WTC11 (cell line): ENCODE measurements at regions of chr6 and their contacts with region 1.

Region 1: GRCh38 chr6:3929281-3929798 is 80.2 kb downstream of the FAM50B start:
- DNase-seq: no peak
- ATAC-seq: no peak
- H3K4me3 Mint-ChIP-seq: no peak overlapping the region
- H3K27ac Mint-ChIP-seq: no peak overlapping the region
- H3K4me1 Mint-ChIP-seq: peaks cover 17% of the 10 kb centered on the region
- H3K27me3 Mint-ChIP-seq: no peaks in the 10 kb centered on the region
- CTCF ChIP-seq: no peak

Region 2: GRCh38 chr6:3742426-3743344 is 186.7 kb before region 1 on chr6:
- CTCF ChIA-PET with region 1: interaction called, 23 read pairs
- POLR2A ChIA-PET with region 1: no interaction called
- DNase-seq: peak; percentile 93
- ATAC-seq: peak; percentile 74
- H3K4me3 Mint-ChIP-seq: no peak overlapping the region; the same call in 1 of the 2 replicates
- H3K27ac Mint-ChIP-seq: no peak overlapping the region
- H3K4me1 Mint-ChIP-seq: peaks cover 41% of the 10 kb centered on the region
- H3K27me3 Mint-ChIP-seq: peaks cover 11% of the 10 kb centered on the region
- CTCF ChIP-seq: peak; percentile 95

Region 3: DNA sequence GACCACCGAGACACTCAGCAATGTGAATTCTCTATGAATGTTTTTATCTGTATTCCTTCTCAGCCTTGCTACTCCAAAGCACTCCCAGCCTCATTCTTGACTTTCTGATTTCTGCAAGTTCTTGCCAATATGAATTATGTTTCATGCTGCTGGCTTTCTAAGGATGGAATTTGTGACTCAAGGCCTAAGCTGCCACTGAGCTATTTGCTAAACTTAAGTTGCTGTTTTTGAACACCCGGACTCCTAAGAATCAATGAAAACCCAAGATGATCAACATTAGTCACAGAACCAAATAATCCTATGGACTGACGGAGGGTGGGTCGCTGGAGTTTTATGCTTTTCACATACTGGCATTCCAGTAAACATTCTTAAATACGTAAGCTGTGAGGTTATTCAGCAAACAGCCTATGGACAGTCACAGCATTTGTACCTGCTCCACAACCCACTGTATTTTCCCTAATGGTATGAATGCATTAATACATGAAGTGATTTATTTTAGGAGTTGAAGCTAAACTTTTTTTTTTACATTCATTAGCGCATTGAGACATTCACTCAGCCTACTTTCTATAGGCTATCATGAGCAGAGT is 169.6 kb before region 1 on chr6:
- CTCF ChIA-PET with region 1: interaction called, 11 read pairs
- POLR2A ChIA-PET with region 1: no interaction called
- DNase-seq: no peak
- ATAC-seq: no peak
- H3K4me3 Mint-ChIP-seq: no peak overlapping the region
- H3K27ac Mint-ChIP-seq: no peak overlapping the region; the same call in 1 of the 2 replicates
- H3K4me1 Mint-ChIP-seq: peaks cover 26% of the 10 kb centered on the region
- H3K27me3 Mint-ChIP-seq: peaks cover 7% of the 10 kb centered on the region
- CTCF ChIP-seq: no peak

Region 4: DNA sequence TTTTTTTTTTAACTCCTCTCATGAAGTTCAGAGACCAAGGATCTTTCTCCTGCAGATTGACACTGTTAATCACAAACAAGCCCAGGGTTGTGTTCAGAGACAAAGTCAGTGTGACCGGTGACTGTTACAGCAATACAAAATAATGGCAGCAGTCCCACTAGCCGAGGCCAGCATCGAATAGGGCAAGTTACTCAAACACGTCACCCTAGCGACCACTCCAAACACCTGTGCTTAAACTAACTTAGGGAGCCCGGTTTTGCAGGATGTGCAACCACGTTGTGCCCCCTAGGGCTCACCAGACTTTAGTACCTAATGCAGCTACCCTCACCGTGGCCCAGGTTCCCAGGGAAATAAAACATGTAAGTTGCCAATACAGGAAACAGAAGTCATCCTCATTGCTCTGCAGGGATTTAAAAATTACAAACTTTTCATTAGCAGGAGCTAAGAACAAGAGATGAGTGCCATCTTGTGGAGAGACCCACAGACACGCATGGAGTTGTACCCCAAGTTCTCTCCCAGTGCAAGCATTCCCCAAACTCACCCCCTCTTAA is 42.1 kb before region 1 on chr6:
- CTCF ChIA-PET with region 1: interaction called, 33 read pairs
- POLR2A ChIA-PET with region 1: no interaction called
- DNase-seq: no peak
- ATAC-seq: peak; percentile 51; the same call in 1 of the 2 replicates
- H3K4me3 Mint-ChIP-seq: no peak overlapping the region
- H3K27ac Mint-ChIP-seq: no peak overlapping the region
- H3K4me1 Mint-ChIP-seq: peaks cover 19% of the 10 kb centered on the region
- H3K27me3 Mint-ChIP-seq: no peaks in the 10 kb centered on the region; the same call in 1 of the 2 replicates
- CTCF ChIP-seq: no peak

Region 5: GRCh38 chr6:3905945-3906845 is 23.1 kb before region 1 on chr6:
- CTCF ChIA-PET with region 1: interaction called, 15 read pairs
- POLR2A ChIA-PET with region 1: no interaction called
- DNase-seq: peak; percentile 41
- ATAC-seq: peak; percentile 74
- H3K4me3 Mint-ChIP-seq: no peak overlapping the region
- H3K27ac Mint-ChIP-seq: peak overlapping the region; percentile 83
- H3K4me1 Mint-ChIP-seq: peaks cover 68% of the 10 kb centered on the region
- H3K27me3 Mint-ChIP-seq: no peaks in the 10 kb centered on the region; the same call in none of the 2 replicates
- CTCF ChIP-seq: no peak

Region 6: DNA sequence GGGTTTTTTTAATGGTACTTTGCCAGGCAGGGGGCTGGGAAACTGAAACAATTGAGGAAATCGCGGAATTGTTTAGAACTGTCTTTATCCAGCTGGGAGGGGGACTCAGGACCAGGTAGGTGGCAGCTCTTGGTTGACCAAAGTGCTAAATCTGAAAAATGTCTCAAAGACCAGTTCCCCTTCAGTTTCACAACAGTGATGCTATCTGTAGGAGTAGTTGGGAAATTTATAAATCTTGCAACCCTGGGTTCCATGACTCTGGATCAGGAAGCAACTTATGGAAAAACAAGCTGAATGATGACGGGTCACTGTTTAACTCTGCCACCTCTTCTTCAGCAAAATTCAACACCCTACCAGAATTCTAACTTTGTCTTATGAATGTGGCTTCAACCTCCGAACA is 19.5 kb after region 1 on chr6:
- CTCF ChIA-PET with region 1: interaction called, 15 read pairs
- POLR2A ChIA-PET with region 1: no interaction called
- DNase-seq: no peak
- ATAC-seq: no peak
- H3K4me3 Mint-ChIP-seq: no peak overlapping the region
- H3K27ac Mint-ChIP-seq: no peak overlapping the region
- H3K4me1 Mint-ChIP-seq: peaks cover 22% of the 10 kb centered on the region
- H3K27me3 Mint-ChIP-seq: no peaks in the 10 kb centered on the region; the same call in 1 of the 2 replicates
- CTCF ChIP-seq: no peak

Region 7: DNA sequence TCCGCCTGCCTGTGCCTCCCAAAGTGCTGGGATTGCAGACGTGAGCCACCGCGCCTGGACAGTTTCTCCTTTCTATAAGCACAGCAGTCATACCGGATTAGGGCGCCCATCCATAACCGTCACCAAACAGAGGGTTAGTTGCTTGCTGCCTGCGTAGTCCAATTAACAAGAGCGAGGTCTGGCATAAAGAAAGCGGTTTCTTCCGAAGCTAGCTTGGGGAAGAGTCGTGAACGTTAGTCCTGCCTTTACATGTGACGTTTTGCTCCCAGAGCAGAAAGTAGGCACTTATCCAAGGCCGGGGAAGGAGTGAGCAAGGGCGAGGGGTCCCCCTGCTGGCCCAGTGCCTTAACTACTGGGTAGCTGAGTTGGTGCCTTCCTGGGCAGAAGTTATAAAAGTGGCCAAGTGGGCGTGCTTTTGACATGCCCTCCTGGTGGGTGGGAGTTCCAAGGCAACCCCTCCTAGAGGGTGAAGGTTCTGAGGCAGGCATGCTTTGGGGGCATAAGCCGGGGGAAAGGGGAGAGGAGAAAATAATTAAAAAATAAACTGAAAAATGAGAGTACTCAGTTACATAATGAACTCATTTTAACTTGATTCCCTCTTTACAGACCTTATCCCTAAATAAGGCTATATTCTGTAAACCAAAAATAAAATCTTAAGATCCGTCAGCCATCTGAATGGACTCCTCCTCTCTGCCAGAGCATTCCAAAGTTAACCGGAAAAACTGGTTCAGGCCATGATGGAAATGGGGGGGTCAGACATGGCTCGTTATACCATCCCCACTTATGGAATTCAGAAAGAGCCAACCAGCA is 61.6 kb after region 1 on chr6:
- CTCF ChIA-PET with region 1: interaction called, 20 read pairs
- POLR2A ChIA-PET with region 1: no interaction called
- DNase-seq: peak; percentile 90
- ATAC-seq: peak; percentile 94
- H3K4me3 Mint-ChIP-seq: peak overlapping the region; percentile 29
- H3K27ac Mint-ChIP-seq: peak overlapping the region; percentile 42
- H3K4me1 Mint-ChIP-seq: peaks cover 44% of the 10 kb centered on the region
- H3K27me3 Mint-ChIP-seq: no peaks in the 10 kb centered on the region
- CTCF ChIP-seq: peak; percentile 78

Region 8: DNA sequence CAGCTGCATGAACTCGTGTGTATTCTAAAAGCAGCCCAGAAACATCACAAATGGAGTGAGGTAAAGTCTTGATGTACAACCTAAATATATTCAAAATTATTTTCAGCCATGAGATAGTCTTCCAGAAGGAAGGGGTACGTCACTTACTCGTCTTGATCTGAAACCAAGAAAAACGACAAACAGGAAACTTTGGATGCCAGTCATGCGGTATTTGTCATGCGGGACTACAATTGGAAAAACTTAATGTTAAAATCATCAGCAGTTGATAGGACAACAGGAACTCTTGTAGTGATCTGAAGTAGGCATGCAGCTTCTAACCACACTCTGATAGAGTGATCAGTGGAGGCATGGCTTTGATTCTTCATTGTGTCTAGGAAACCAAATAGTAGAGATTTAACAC is 119.9 kb after region 1 on chr6:
- CTCF ChIA-PET with region 1: no interaction called
- POLR2A ChIA-PET with region 1: no interaction called
- DNase-seq: no peak
- ATAC-seq: no peak
- H3K4me3 Mint-ChIP-seq: no peak overlapping the region
- H3K27ac Mint-ChIP-seq: no peak overlapping the region
- H3K4me1 Mint-ChIP-seq: no peaks in the 10 kb centered on the region
- H3K27me3 Mint-ChIP-seq: no peaks in the 10 kb centered on the region
- CTCF ChIP-seq: no peak